Activated CD4-positive, alpha-beta memory T cell treated with anti-CD3 and anti-CD28 coated beads for 36 hours (primary cell): ENCODE measurements at regions of chr13 and their contacts with region 1.

Region 1: DNA sequence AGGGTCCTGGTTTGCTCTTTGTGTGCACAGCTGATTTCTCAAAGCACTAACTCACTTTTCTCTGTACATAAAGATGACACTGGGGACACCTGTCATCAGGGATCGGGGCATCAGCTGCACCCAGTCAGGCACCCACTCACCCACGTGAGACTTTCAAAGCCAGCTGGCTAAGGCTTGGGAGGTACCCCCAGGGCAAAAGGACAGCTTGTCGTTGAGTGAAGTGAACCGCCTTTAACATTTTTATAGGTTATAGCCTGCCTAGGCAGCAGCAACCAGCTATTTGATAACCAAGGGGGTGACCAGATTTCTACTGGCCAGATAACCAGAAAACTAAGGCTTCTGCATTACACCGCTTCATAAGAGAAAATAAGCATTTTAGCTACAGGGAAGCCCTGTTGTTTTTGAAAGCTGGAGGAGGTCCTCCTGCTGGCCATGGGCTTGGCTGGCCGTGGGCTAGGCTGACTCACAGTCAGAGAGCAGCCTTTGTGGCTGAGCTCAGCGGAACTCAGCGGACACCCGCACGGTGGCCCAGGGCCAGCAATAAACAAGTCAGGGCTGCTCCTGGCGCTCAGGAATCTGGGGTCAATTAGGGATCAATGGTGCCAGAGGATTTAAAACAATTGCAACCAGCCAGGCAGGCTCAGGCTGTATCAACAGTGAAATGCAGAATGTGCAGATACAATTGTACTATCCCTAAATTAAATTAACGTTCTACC is 57.1 kb downstream of the ALOX5AP start:
- DNase-seq: no peak
- H3K4me3 Mint-ChIP-seq: no peak overlapping the region
- H3K27ac Mint-ChIP-seq: no peak overlapping the region
- H3K4me1 Mint-ChIP-seq: peaks cover 35% of the 10 kb centered on the region
- H3K27me3 Mint-ChIP-seq: no peaks in the 10 kb centered on the region

Region 2: DNA sequence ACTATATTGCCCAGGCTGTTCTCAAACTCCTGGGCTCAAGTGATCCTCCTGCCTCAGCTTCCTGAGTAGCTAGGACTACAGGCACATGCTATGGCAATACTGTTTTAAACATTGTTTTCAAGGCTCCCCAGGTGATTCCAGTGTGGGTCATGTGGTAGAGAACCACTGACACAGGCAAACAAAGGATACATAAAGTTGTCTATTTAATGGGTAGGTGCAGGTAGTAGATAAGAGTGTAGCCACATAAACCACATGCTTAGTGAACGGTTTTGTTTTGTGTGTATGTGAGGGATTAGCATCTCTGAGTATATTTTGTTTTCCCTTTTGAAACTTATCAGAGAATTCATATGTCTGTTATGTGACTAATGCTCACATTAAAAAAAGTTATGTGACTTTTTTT is 138.0 kb before region 1 on chr13:
- CTCF ChIA-PET with region 1: no interaction called
- POLR2A ChIA-PET with region 1: no interaction called
- intact Hi-C with region 1: loop called (anchors 1 kb)
- DNase-seq: peak; percentile 43
- H3K4me3 Mint-ChIP-seq: no peak overlapping the region
- H3K27ac Mint-ChIP-seq: peak overlapping the region; percentile 42
- H3K4me1 Mint-ChIP-seq: peaks cover 33% of the 10 kb centered on the region
- H3K27me3 Mint-ChIP-seq: no peaks in the 10 kb centered on the region

Region 3: DNA sequence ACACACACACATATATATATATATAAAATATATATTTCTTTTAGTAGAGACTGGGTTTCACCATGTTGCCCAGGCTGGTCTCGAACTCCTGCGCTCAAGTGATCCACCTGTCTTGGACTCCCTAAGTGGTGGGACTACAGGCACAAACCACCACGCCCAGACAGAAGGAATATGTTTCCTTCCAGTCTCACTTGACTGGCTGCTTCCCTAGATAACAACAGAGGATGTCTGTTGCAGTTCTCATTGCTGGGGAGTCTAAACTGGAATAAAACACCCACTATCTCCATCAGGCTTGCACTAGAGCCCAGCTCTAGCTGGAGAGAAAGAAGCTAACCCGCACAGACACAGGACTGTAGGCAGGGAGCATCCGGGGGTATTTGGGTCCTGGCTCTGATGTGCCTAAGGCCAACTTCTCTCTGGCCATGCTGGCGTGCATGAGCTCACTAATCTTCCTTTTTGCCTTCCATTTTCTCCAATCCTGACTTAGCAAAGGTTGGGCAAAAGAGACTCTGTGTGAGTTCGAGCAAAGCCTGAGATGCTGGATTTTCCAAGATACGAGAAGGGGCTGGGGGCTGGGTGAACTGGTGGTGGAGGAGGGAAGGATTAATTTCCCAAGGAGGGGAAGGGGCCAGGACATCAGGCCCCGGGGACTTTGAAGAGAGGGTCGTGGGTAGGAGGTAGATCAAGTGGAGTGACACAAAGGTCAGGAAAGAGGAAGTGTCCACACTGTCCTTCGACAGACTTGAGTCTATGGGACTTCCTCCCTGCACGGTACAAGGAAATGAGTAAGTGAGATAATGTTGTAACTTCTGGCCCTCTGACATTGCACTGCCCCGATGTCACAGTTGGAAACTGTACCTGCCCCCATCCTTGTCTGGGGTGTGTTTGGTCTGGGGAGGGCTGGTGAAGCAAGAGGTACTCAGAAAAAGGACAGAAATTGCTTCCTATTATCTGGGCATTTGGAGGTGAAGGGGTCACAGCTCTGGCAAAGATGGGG is 79.6 kb before region 1 on chr13:
- CTCF ChIA-PET with region 1: no interaction called
- POLR2A ChIA-PET with region 1: no interaction called
- intact Hi-C with region 1: no loop called
- DNase-seq: peak; percentile 37
- H3K4me3 Mint-ChIP-seq: no peak overlapping the region
- H3K27ac Mint-ChIP-seq: no peak overlapping the region
- H3K4me1 Mint-ChIP-seq: peaks cover 15% of the 10 kb centered on the region
- H3K27me3 Mint-ChIP-seq: peaks cover 3% of the 10 kb centered on the region

Region 4: GRCh38 chr13:30774214-30774730 is 18.2 kb before region 1 on chr13:
- CTCF ChIA-PET with region 1: no interaction called
- POLR2A ChIA-PET with region 1: interaction called, 3 read pairs
- intact Hi-C with region 1: loop called (anchors 2 kb)
- DNase-seq: peak; percentile 56
- H3K4me3 Mint-ChIP-seq: peak overlapping the region; percentile 0
- H3K27ac Mint-ChIP-seq: peak overlapping the region; percentile 53
- H3K4me1 Mint-ChIP-seq: peaks cover 24% of the 10 kb centered on the region
- H3K27me3 Mint-ChIP-seq: no peaks in the 10 kb centered on the region

Region 5: DNA sequence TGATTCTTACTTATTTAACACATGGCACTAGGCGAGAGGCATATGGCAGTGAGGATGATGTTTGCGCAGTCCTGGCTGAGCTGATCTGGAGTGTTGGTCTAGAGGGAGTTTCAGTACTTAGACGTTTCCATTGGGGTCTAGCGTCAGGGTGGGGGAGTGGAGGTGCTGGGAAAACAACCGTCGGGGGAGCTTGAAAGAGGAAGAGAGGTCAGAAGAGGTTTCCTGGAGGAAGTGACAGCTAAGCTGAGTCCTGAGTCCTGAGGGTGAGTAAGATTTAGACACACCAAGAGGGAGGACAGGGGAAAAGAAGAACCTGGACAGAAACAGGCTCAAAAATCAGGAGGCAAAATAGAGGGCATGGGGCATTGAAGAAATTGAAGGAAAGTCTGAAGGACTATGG is 24.3 kb after region 1 on chr13:
- CTCF ChIA-PET with region 1: no interaction called
- POLR2A ChIA-PET with region 1: no interaction called
- intact Hi-C with region 1: no loop called
- DNase-seq: no peak
- H3K4me3 Mint-ChIP-seq: no peak overlapping the region
- H3K27ac Mint-ChIP-seq: no peak overlapping the region
- H3K4me1 Mint-ChIP-seq: no peaks in the 10 kb centered on the region
- H3K27me3 Mint-ChIP-seq: peaks cover 1% of the 10 kb centered on the region

Region 6: GRCh38 chr13:30927595-30927994 is 135.2 kb after region 1 on chr13:
- CTCF ChIA-PET with region 1: no interaction called
- POLR2A ChIA-PET with region 1: no interaction called
- intact Hi-C with region 1: no loop called
- DNase-seq: no peak
- H3K4me3 Mint-ChIP-seq: no peak overlapping the region
- H3K27ac Mint-ChIP-seq: no peak overlapping the region
- H3K4me1 Mint-ChIP-seq: peaks cover 12% of the 10 kb centered on the region
- H3K27me3 Mint-ChIP-seq: peaks cover 34% of the 10 kb centered on the region

Region 7: GRCh38 chr13:31699650-31700049 is 907.2 kb after region 1 on chr13:
- CTCF ChIA-PET with region 1: no interaction called
- POLR2A ChIA-PET with region 1: no interaction called
- intact Hi-C with region 1: no loop called
- DNase-seq: no peak
- H3K4me3 Mint-ChIP-seq: no peak overlapping the region
- H3K27ac Mint-ChIP-seq: no peak overlapping the region
- H3K4me1 Mint-ChIP-seq: no peaks in the 10 kb centered on the region
- H3K27me3 Mint-ChIP-seq: peaks cover 3% of the 10 kb centered on the region